HepG2 (cell line): ENCODE measurements at regions of chr6 and their contacts with region 1.

Region 1: DNA sequence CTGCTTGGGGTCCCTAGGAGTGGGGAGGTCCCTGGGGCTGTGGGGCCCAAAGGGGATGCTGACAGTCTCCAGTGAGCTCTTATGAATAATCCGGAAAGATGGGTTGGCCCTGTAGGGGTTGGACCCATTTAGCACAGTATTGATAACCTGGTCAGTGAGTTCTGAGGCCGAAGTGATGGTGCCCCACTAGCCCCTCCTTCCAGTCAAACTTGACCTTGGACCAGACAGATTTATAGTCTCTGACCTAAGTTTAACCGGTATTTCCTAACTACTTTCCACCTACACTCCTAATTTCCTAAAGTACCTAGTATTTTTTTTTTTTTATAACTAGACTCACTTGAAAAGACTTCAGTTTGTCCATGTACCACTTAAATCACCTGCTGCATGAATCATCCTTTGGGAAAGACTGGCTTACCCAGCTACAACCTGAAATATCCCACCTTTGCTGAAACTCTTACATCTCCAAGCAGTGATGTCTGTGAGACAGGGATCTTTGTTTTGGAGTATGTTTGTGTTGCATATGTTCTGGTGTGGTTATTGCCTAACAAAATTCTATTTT is 71.0 kb downstream of the ZDHHC14 start:
- DNase-seq: no peak
- ATAC-seq: no peak
- H3K4me3 ChIP-seq: no peak overlapping the region
- H3K27ac ChIP-seq: no peak overlapping the region
- H3K4me1 ChIP-seq: peaks cover 14% of the 10 kb centered on the region
- H3K27me3 ChIP-seq: no peaks in the 10 kb centered on the region
- CTCF ChIP-seq: no peak
- EP300 ChIP-seq: no peak
- POLR2A ChIP-seq: no peak
- RAD21 ChIP-seq: no peak

Region 2: GRCh38 chr6:157434349-157435033 is 17.5 kb before region 1 on chr6:
- CTCF ChIA-PET with region 1: no interaction called
- POLR2A ChIA-PET with region 1: interaction called, 3 read pairs
- in situ Hi-C with region 1: no loop called
- intact Hi-C with region 1: loop called (anchors 1 kb)
- DNase-seq: peak; percentile 90
- ATAC-seq: peak; percentile 95
- H3K4me3 ChIP-seq: peak overlapping the region in 1 of 3 experiments; percentile 29; a peak in 2 of 6 replicates
- H3K27ac ChIP-seq: peak overlapping the region; percentile 38
- H3K4me1 ChIP-seq: peaks cover 26% of the 10 kb centered on the region
- H3K27me3 ChIP-seq: no peaks in the 10 kb centered on the region
- CTCF ChIP-seq: no peak
- EP300 ChIP-seq: peak in 1 of 2 experiments; percentile 61; a peak in 2 of 4 replicates
- POLR2A ChIP-seq: no peak
- RAD21 ChIP-seq: no peak; the same call in 1 of the 2 replicates

Region 3: GRCh38 chr6:157464653-157465535 is 12.9 kb after region 1 on chr6:
- CTCF ChIA-PET with region 1: no interaction called
- POLR2A ChIA-PET with region 1: no interaction called
- in situ Hi-C with region 1: no loop called
- intact Hi-C with region 1: no loop called
- DNase-seq: no peak
- ATAC-seq: no peak
- H3K4me3 ChIP-seq: no peak overlapping the region
- H3K27ac ChIP-seq: no peak overlapping the region
- H3K4me1 ChIP-seq: peaks cover 19% of the 10 kb centered on the region
- H3K27me3 ChIP-seq: no peaks in the 10 kb centered on the region
- CTCF ChIP-seq: no peak
- EP300 ChIP-seq: no peak
- POLR2A ChIP-seq: no peak
- RAD21 ChIP-seq: no peak

Region 4: DNA sequence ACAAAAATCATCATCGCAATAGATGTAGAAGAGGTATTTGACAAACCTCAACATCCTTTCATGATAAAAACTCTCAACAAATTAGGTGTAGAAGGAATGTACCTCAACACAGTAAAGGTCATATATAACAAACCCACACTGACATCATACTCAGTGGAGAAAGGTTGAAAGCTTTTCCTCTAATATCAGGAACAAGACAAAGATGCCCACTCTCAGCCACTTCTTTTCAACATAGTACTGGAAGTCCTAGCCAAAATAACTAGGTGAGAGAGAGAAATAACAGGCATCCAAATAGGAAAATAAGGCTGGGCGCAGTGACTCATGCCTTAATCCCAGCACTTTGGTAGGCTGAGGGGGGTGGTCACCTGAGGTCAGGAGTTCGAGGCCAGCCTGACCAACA is 24.8 kb after region 1 on chr6:
- CTCF ChIA-PET with region 1: no interaction called
- POLR2A ChIA-PET with region 1: no interaction called
- in situ Hi-C with region 1: no loop called
- intact Hi-C with region 1: no loop called
- DNase-seq: no peak
- ATAC-seq: no peak
- H3K4me3 ChIP-seq: no peak overlapping the region
- H3K27ac ChIP-seq: no peak overlapping the region
- H3K4me1 ChIP-seq: peaks cover 9% of the 10 kb centered on the region; the same call in 1 of the 2 replicates
- H3K27me3 ChIP-seq: no peaks in the 10 kb centered on the region
- CTCF ChIP-seq: no peak
- EP300 ChIP-seq: no peak
- POLR2A ChIP-seq: no peak
- RAD21 ChIP-seq: no peak